ENCODE measurements at regions of chr15 and their contacts with region 1.

Region 1: DNA sequence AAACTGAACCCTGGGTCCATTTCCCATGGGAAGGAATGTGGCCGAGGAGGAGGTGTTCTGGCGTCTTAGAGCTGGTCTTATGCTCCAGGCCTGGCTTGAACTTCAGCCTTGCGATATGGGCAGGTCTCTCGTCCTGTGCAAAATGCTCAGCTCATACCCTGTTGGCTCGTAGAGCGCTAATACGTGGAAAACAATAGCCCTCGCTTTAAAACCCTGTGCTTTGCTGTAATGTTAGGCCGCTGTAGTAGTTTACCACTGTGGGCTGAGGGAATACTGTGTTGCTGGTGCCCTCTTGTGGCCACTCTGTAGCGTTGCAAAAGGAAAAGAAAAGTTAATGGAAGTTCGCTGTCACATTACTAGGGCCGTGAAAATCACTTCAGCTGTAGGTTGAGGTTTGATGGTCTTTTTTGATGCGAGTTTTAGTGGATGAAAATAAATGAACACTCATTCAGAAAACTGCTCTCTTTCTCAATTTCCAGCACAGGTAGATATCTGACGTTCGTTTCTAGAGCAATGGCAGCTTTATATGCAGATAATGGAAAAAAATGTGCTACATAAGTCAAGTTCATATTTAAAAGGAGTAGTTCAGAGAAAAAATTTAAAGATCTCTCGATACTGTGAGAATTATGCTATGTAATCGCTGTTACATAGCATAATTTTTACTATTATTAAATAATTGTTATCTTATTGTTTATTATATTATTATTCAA is 92.9 kb downstream of the MCTP2 start:
- DNase-seq: peak; percentile 22 to 65 (median 41)
- H3K4me3 ChIP-seq: no peak overlapping the region
- H3K27ac ChIP-seq: no peak overlapping the region
- H3K4me1 ChIP-seq: peaks cover 0 to 5% of the 10 kb centered on the region in 2 donors
- H3K27me3 ChIP-seq: no peaks in the 10 kb centered on the region
- CTCF ChIP-seq: peak; percentile 83 to 92 (median 89)
- POLR2A ChIP-seq: no peak

Region 2: DNA sequence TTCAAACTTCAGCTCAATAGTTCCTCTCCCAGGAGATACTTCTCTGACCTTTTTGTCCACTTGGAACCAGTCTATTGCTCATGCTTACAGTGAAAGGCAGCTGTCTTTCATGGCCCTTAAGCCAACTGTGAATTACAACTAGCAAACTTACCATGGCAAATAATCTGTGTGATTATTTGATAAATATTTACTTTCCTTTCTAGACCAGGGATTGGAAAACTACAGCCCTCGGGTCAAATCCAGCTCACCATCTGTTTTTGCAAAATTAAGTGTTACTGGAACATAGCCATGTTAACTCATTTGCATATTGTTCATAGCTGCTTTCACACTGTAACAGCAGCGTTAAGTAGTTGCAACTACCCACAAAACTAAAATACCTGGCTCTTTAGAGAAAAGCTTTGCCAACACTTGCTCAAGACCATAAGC is 382.0 kb before region 1 on chr15:
- intact Hi-C with region 1: no loop called
- DNase-seq: no peak
- H3K4me3 ChIP-seq: no peak overlapping the region
- H3K27ac ChIP-seq: no peak overlapping the region
- H3K4me1 ChIP-seq: no peaks in the 10 kb centered on the region
- H3K27me3 ChIP-seq: no peaks in the 10 kb centered on the region
- CTCF ChIP-seq: no peak
- POLR2A ChIP-seq: no peak

Region 3: GRCh38 chr15:94163999-94164807 is 160.1 kb before region 1 on chr15:
- intact Hi-C with region 1: loop called (anchors 5 to 10 kb)
- DNase-seq: peak; percentile 28 to 72 (median 52)
- H3K4me3 ChIP-seq: no peak overlapping the region
- H3K27ac ChIP-seq: no peak overlapping the region
- H3K4me1 ChIP-seq: no peaks in the 10 kb centered on the region
- H3K27me3 ChIP-seq: no peaks in the 10 kb centered on the region
- CTCF ChIP-seq: peak; percentile 65 to 85 (median 76)
- POLR2A ChIP-seq: no peak

Region 4: GRCh38 chr15:94253742-94254141 is 70.5 kb before region 1 on chr15:
- intact Hi-C with region 1: no loop called
- DNase-seq: no peak
- H3K4me3 ChIP-seq: no peak overlapping the region
- H3K27ac ChIP-seq: no peak overlapping the region
- H3K4me1 ChIP-seq: no peaks in the 10 kb centered on the region
- H3K27me3 ChIP-seq: no peaks in the 10 kb centered on the region
- CTCF ChIP-seq: no peak
- POLR2A ChIP-seq: no peak